Naive thymus-derived CD4-positive, alpha-beta T cell (primary cell): ENCODE measurements at regions of chr2 and their contacts with region 1.

Region 1: GRCh38 chr2:165293440-165294353 is 54.5 kb downstream of the SCN2A start:
- DNase-seq: peak in 7 of 9 donors; percentile 78 to 89 (median 86)
- ATAC-seq: peak; percentile 100
- H3K4me3 ChIP-seq: no peak overlapping the region
- H3K4me3 Mint-ChIP-seq: peak overlapping the region in 6 of 10 donors; percentile 6 to 50 (median 24)
- H3K27ac ChIP-seq: no peak overlapping the region
- H3K27ac Mint-ChIP-seq: peak overlapping the region in 2 of 9 donors; percentile 12 to 50
- H3K4me1 ChIP-seq: no peaks in the 10 kb centered on the region
- H3K4me1 Mint-ChIP-seq: peaks cover 0 to 13% (median 6%) of the 10 kb centered on the region in 7 donors
- H3K27me3 ChIP-seq: no peaks in the 10 kb centered on the region
- H3K27me3 Mint-ChIP-seq: peaks cover 6 to 18% (median 8%) of the 10 kb centered on the region in 5 donors

Region 2: GRCh38 chr2:164737612-164738081 is 556.0 kb before region 1 on chr2:
- CTCF ChIA-PET with region 1: no interaction called
- POLR2A ChIA-PET with region 1: no interaction called
- intact Hi-C with region 1: loop called in 1 of 2 experiments (anchors 1 kb)
- DNase-seq: peak in 2 of 9 donors; percentile 2 to 21
- ATAC-seq: peak; percentile 60
- H3K4me3 ChIP-seq: no peak overlapping the region
- H3K4me3 Mint-ChIP-seq: no peak overlapping the region
- H3K27ac ChIP-seq: no peak overlapping the region
- H3K27ac Mint-ChIP-seq: no peak overlapping the region
- H3K4me1 ChIP-seq: no peaks in the 10 kb centered on the region
- H3K4me1 Mint-ChIP-seq: no peaks in the 10 kb centered on the region
- H3K27me3 ChIP-seq: no peaks in the 10 kb centered on the region
- H3K27me3 Mint-ChIP-seq: peaks cover 0 to 9% (median 4%) of the 10 kb centered on the region in 5 donors

Region 3: GRCh38 chr2:164992818-164993217 is 300.9 kb before region 1 on chr2:
- CTCF ChIA-PET with region 1: no interaction called
- POLR2A ChIA-PET with region 1: no interaction called
- intact Hi-C with region 1: loop called (anchors 1 kb)
- DNase-seq: peak in 7 of 9 donors; percentile 29 to 54 (median 42)
- ATAC-seq: peak; percentile 68
- H3K4me3 ChIP-seq: no peak overlapping the region
- H3K4me3 Mint-ChIP-seq: no peak overlapping the region
- H3K27ac ChIP-seq: no peak overlapping the region
- H3K27ac Mint-ChIP-seq: no peak overlapping the region
- H3K4me1 ChIP-seq: no peaks in the 10 kb centered on the region
- H3K4me1 Mint-ChIP-seq: peaks cover 10 to 36% (median 16%) of the 10 kb centered on the region in 7 donors
- H3K27me3 ChIP-seq: no peaks in the 10 kb centered on the region
- H3K27me3 Mint-ChIP-seq: no peaks in the 10 kb centered on the region

Region 4: DNA sequence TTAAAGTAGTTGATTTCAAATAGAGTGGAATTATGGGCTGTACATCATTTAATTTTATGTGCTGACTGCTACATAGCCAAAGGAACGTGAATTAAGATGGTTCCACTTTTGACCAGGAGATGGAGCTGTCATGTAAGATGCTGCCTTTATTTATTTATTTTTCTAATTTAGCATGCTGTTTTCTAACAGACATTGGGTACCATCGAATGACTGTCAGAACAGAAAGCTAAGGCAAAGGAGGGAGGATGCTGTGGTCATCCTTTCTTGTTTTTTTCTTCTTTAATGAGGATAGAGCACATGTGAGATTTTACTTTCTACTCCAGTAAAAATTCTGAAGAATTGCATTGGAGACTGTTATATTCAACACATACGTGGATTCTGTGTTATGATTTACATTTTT is 54.5 kb before region 1 on chr2 and contains the start of gene SCN2A:
- CTCF ChIA-PET with region 1: interaction called, 3 read pairs
- POLR2A ChIA-PET with region 1: no interaction called
- intact Hi-C with region 1: loop called (anchors 1 kb)
- DNase-seq: peak in 3 of 9 donors; percentile 1 to 5 (median 1)
- ATAC-seq: no peak
- H3K4me3 ChIP-seq: no peak within 1 kb of the TSS
- H3K4me3 Mint-ChIP-seq: no peak within 1 kb of the TSS
- H3K27ac ChIP-seq: no peak within 1 kb of the TSS
- H3K27ac Mint-ChIP-seq: no peak within 1 kb of the TSS
- H3K4me1 ChIP-seq: no peaks in the 10 kb centered on the region
- H3K4me1 Mint-ChIP-seq: no peaks in the 10 kb centered on the region
- H3K27me3 ChIP-seq: peaks cover 0 to 3% of the 10 kb centered on the region in 2 donors
- H3K27me3 Mint-ChIP-seq: peaks cover 0 to 9% (median 0%) of the 10 kb centered on the region in 5 donors
- total RNA-seq, gene SCN2A: not detected

Region 5: GRCh38 chr2:165390875-165391274 is 97.2 kb after region 1 on chr2:
- CTCF ChIA-PET with region 1: no interaction called
- POLR2A ChIA-PET with region 1: no interaction called
- intact Hi-C with region 1: loop called in 1 of 2 experiments (anchors 5 kb)
- DNase-seq: no peak
- ATAC-seq: no peak
- H3K4me3 ChIP-seq: no peak overlapping the region
- H3K4me3 Mint-ChIP-seq: no peak overlapping the region
- H3K27ac ChIP-seq: no peak overlapping the region
- H3K27ac Mint-ChIP-seq: no peak overlapping the region
- H3K4me1 ChIP-seq: no peaks in the 10 kb centered on the region
- H3K4me1 Mint-ChIP-seq: peaks cover 0 to 13% (median 3%) of the 10 kb centered on the region in 7 donors
- H3K27me3 ChIP-seq: no peaks in the 10 kb centered on the region
- H3K27me3 Mint-ChIP-seq: peaks cover 11 to 24% (median 16%) of the 10 kb centered on the region in 5 donors

Region 6: GRCh38 chr2:165794536-165794928 is 500.8 kb after region 1 on chr2:
- CTCF ChIA-PET with region 1: no interaction called
- POLR2A ChIA-PET with region 1: no interaction called
- intact Hi-C with region 1: loop called in 1 of 2 experiments (anchors 10 kb)
- DNase-seq: peak in 6 of 9 donors; percentile 25 to 65 (median 32)
- ATAC-seq: peak; percentile 91
- H3K4me3 ChIP-seq: peak overlapping the region; percentile 58
- H3K4me3 Mint-ChIP-seq: peak overlapping the region; percentile 85 to 97 (median 88)
- H3K27ac ChIP-seq: no peak overlapping the region
- H3K27ac Mint-ChIP-seq: peak overlapping the region in 5 of 9 donors; percentile 21 to 97 (median 44)
- H3K4me1 ChIP-seq: peaks cover 0 to 6% of the 10 kb centered on the region in 2 donors
- H3K4me1 Mint-ChIP-seq: peaks cover 14 to 42% (median 20%) of the 10 kb centered on the region in 7 donors
- H3K27me3 ChIP-seq: peaks cover 0 to 7% of the 10 kb centered on the region in 2 donors
- H3K27me3 Mint-ChIP-seq: peaks cover 12 to 46% (median 37%) of the 10 kb centered on the region in 5 donors